Mammary epithelial cell (primary cell): ENCODE measurements at regions of chr5 and their contacts with region 1.

Region 1: GRCh38 chr5:166768536-166768935 is 1522.9 kb upstream of the WWC1 start:
- DNase-seq: peak; percentile 4
- H3K4me3 ChIP-seq: no peak overlapping the region
- H3K27ac ChIP-seq: peak overlapping the region; percentile 0
- H3K4me1 ChIP-seq: peaks cover 24% of the 10 kb centered on the region
- H3K27me3 ChIP-seq: no peaks in the 10 kb centered on the region
- CTCF ChIP-seq: no peak

Region 2: GRCh38 chr5:166710288-166710687 is 58.2 kb before region 1 on chr5:
- CTCF ChIA-PET with region 1: no interaction called
- dilution Hi-C with region 1: no loop called
- in situ Hi-C with region 1: no loop called
- intact Hi-C with region 1: no loop called
- DNase-seq: no peak
- H3K4me3 ChIP-seq: no peak overlapping the region
- H3K27ac ChIP-seq: no peak overlapping the region
- H3K4me1 ChIP-seq: no peaks in the 10 kb centered on the region
- H3K27me3 ChIP-seq: peaks cover 2% of the 10 kb centered on the region
- CTCF ChIP-seq: no peak

Region 3: GRCh38 chr5:166722939-166723338 is 45.6 kb before region 1 on chr5:
- CTCF ChIA-PET with region 1: no interaction called
- dilution Hi-C with region 1: no loop called
- in situ Hi-C with region 1: no loop called
- intact Hi-C with region 1: loop called (anchors 5 kb)
- DNase-seq: peak; percentile 86
- H3K4me3 ChIP-seq: no peak overlapping the region
- H3K27ac ChIP-seq: peak overlapping the region; percentile 91
- H3K4me1 ChIP-seq: peaks cover 20% of the 10 kb centered on the region
- H3K27me3 ChIP-seq: no peaks in the 10 kb centered on the region
- CTCF ChIP-seq: no peak